ENCODE measurements at regions of chr5 and their contacts with region 1.

Region 1: DNA sequence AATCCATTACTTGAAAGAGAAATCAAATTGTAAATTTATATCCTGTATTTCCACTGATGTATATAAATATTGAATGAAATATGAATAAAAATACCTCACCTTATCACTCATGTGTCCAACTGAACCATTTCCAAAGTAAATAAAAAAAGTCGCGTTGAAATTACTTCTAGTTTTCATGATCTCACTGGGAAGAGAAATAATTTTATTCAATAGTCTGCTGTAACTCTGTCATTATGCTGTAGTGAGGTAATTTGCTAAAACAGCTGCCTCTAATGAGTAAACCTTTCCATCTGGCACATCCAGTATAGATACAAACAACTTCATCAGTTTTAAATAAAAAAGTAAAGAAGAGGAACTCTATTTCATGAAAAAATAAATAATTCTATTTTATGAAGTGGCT is 611.5 kb downstream of the ZNF608 start:
- DNase-seq: no peak
- ATAC-seq: no peak

Region 2: DNA sequence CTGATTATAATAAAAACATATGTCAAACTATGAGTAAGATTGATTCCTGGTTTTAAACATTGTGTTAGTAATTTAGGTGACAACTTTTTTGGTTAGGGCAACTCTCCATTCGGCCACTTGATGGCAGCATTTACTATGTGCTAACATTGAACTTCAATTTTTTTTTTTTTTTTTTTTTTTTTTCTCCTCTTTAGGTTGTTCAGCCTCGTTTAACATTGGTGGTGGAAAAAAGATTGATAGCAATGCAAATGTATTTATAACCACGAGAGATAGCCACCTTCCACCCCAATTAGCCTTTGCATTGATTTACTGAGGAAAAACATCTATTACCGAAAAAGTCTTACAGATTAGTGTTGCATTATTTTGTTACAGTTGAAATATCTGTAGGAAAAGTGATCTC is 463.9 kb before region 1 on chr5:
- intact Hi-C with region 1: loop called (anchors 5 kb)
- DNase-seq: no peak
- ATAC-seq: no peak

Region 3: DNA sequence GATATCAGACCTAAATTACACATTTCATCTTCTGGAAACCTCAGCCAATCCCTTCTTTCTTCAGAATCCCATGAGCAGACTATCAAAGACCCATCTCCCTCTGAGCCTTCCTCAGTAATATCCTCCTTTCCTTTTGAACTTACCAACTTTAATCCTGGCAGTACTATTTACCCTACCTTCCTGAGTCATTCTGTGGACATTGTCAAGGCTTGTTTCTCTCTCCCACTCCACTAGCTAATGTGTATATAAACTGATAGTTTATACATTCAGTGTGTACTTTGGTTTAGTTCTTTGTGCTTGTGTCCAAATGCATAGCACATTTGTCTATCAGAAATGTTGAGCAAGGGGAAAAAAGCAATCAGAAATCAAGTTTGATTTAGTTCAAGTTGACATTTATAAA is 54.7 kb before region 1 on chr5:
- intact Hi-C with region 1: no loop called
- DNase-seq: no peak
- ATAC-seq: no peak

Region 4: DNA sequence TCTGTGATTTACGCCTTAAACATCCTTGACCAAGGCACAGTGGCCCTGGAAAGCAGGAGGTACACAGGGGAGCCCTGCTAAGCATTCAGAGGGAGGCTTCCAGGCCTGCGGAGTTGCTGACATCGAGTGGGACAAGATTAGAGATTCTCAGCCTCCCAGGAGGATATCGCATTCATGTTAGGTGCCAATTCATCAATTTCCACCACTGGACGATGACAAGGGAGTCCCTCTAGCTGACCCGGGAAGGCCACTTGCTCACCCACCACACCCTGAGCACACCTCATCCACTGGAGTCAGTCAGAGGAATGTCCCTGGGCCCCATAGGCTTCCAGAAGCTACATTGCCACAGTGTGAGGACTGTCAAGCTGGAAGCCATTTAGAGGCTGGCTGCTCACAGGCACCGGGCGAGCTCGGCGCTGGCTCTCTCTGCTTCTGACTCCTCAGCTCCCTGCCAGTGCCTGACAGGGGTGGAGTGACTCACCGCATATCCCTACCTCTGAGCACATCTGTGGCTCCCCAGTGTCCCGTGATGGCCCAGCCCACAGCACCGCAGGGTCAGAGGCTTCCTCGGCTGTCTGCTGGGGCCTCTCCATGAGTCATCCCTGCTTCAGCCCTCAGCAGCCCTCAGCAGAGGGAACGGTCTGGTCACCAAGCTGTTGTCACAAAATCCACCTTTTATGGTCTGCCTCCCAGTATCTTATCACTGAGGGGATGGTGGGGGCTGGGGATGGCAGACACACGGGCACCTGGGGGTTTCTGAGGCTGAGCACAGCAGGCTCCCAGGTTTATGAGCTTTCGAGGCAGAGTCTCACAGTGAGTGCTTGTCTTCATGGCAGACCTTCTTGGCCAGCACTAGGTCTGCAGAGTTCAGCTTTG is 494.0 kb after region 1 on chr5:
- intact Hi-C with region 1: no loop called
- DNase-seq: peak; percentile 30
- ATAC-seq: peak; percentile 47

Measured in left ventricle myocardium superior (tissue), 1 donor.